ENCODE measurements at regions of chr15 and their contacts with region 1.

Region 1: DNA sequence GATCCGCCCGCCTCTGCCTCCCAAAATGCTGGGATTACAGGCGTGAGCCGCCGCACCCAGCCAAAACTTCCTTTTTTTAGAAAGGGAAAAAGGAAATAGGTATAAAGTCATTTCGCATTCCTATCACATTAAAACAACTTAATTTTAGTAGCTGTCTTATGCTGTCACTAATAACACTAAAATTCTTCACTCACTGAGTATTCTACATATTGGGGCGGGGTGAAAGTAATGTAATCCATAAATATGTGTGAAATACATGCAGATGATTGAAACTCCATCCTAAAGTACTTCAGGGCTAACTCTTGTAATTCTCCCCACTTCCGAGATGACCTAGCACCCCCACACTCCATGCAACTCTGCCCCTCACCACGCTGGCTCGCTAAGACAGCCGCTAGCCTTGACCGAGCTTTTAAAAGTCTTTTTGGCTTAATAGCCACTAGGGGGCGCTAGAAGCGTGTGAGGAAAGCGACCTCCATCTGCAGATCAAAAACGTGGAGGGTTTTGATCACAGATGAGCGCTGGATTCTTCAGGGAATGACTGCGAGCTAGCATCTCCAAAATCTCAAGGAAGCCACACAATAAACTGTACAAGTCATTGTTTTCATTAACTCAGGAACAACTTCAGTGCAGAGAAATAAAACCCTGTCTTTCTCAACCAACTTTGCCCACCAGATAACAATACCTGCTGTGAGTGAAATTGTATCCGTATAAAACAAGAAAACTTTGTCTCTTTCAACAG is 129.3 kb upstream of the IGF1R start:
- DNase-seq: peak; percentile 76
- ATAC-seq: peak; percentile 94
- H3K4me3 ChIP-seq: no peak overlapping the region
- H3K27ac ChIP-seq: no peak overlapping the region
- H3K4me1 ChIP-seq: no peaks in the 10 kb centered on the region
- H3K27me3 ChIP-seq: peaks cover 4% of the 10 kb centered on the region
- CTCF ChIP-seq: peak; percentile 76
- POLR2A ChIP-seq: no peak
- RAD21 ChIP-seq: peak; percentile 80

Region 2: DNA sequence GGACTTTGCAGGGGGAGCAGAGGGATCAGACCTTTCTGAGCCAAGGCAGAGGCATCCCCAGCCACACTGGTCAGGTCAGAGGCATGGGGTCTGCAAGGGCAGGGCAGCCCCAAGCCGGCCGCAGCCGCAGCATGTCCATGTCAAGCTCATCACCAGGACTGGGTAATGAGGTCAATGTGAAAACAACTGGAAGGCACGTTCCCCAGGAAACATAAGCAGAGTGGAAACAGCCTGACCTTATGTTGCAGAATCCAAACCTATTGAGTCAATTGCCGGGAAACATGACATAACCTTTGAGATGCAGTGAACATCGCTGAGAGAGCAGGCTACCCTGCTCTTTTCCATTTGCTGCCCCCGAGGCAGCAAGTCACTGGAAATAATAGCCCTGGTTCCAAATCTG is 185.7 kb before region 1 on chr15:
- CTCF ChIA-PET with region 1: no interaction called
- POLR2A ChIA-PET with region 1: no interaction called
- dilution Hi-C with region 1: no loop called
- in situ Hi-C with region 1: no loop called
- intact Hi-C with region 1: no loop called
- DNase-seq: no peak
- ATAC-seq: no peak
- H3K4me3 ChIP-seq: no peak overlapping the region
- H3K27ac ChIP-seq: no peak overlapping the region
- H3K4me1 ChIP-seq: no peaks in the 10 kb centered on the region
- H3K27me3 ChIP-seq: no peaks in the 10 kb centered on the region
- CTCF ChIP-seq: no peak
- POLR2A ChIP-seq: no peak
- RAD21 ChIP-seq: no peak

Region 3: DNA sequence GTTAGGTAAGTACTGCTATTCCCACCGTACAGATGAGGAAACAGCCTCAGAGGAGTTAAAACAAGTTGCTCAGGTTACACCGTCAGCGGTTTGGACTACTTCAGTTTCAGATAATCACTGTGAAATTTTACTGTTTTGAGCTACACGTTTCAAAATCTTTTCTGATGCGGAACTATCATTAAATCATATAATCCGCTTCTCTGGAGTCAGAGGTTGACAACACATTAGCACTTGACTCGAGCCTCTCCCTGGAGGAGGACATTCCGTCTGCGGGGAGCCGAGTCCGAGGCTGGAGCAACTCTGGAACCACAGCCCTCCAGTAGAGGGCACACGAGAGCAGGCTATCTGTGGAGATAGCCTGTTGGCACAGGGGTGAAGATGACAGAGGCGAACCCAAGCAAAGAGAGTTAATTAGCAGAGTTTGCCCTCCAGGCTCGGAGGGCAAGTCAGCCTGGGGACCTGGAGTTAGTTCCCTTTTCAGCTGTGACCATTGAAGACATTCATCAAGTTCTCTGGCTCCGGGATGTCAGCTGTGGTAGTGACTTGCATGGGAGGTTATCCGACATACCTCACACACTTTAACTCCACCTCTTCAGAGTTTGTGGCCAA is 260.6 kb after region 1 on chr15:
- CTCF ChIA-PET with region 1: no interaction called
- POLR2A ChIA-PET with region 1: no interaction called
- dilution Hi-C with region 1: no loop called
- in situ Hi-C with region 1: no loop called
- intact Hi-C with region 1: loop called (anchors 5 kb)
- DNase-seq: peak; percentile 65
- ATAC-seq: peak; percentile 91
- H3K4me3 ChIP-seq: no peak overlapping the region
- H3K27ac ChIP-seq: no peak overlapping the region
- H3K4me1 ChIP-seq: peaks cover 14% of the 10 kb centered on the region
- H3K27me3 ChIP-seq: no peaks in the 10 kb centered on the region
- CTCF ChIP-seq: peak; percentile 84
- POLR2A ChIP-seq: no peak
- RAD21 ChIP-seq: peak; percentile 87

Region 4: GRCh38 chr15:98904544-98904943 is 385.6 kb after region 1 on chr15:
- CTCF ChIA-PET with region 1: no interaction called
- POLR2A ChIA-PET with region 1: no interaction called
- dilution Hi-C with region 1: no loop called
- in situ Hi-C with region 1: no loop called
- intact Hi-C with region 1: loop called (anchors 1 kb)
- DNase-seq: peak; percentile 75
- ATAC-seq: peak; percentile 66
- H3K4me3 ChIP-seq: no peak overlapping the region
- H3K27ac ChIP-seq: peak overlapping the region; percentile 60; the same call in 1 of the 2 replicates
- H3K4me1 ChIP-seq: peaks cover 51% of the 10 kb centered on the region
- H3K27me3 ChIP-seq: no peaks in the 10 kb centered on the region
- CTCF ChIP-seq: peak; percentile 82
- POLR2A ChIP-seq: 0 out of 2 replicates have a peak, but pooled peaks have one; percentile 30
- RAD21 ChIP-seq: peak; percentile 85

Region 5: DNA sequence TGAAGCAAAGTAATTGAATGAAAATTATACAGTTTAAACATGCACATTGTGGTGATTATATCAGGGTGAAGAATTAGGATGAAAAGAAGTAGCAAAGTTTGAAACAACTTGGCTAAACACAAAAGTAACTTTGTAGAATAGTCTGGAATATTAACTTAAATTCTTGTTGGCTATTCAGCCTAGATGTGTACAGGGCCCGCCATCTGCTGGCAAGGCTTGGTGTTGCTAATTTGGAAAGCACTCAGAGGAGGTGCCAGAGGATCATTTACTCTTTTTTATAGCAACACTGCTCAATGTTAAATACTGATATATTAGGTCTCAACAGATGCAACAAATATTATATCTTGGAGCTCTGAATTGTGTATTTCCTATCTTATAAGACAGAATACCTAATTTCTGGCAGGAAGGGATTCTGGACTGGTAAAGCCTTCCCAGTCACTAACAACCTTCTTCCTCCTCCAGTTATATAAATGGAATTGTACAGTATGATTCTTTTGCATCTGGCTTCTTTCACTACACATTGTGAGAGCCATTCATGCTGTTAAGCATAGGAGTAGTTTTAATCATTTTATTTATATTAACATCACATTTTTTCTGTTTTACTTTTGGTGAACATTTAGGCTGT is 694.3 kb after region 1 on chr15:
- CTCF ChIA-PET with region 1: no interaction called
- POLR2A ChIA-PET with region 1: no interaction called
- dilution Hi-C with region 1: no loop called
- in situ Hi-C with region 1: no loop called
- intact Hi-C with region 1: loop called (anchors 10 kb)
- DNase-seq: peak; percentile 67
- ATAC-seq: peak; percentile 79
- H3K4me3 ChIP-seq: no peak overlapping the region
- H3K27ac ChIP-seq: no peak overlapping the region
- H3K4me1 ChIP-seq: no peaks in the 10 kb centered on the region
- H3K27me3 ChIP-seq: no peaks in the 10 kb centered on the region
- CTCF ChIP-seq: peak; percentile 96
- POLR2A ChIP-seq: no peak; the same call in 1 of the 2 replicates
- RAD21 ChIP-seq: peak; percentile 97

Measured in IMR-90 (cell line).